Transverse colon (tissue), 4 donors: ENCODE measurements at regions of chr3 and their contacts with region 1.

Region 1: DNA sequence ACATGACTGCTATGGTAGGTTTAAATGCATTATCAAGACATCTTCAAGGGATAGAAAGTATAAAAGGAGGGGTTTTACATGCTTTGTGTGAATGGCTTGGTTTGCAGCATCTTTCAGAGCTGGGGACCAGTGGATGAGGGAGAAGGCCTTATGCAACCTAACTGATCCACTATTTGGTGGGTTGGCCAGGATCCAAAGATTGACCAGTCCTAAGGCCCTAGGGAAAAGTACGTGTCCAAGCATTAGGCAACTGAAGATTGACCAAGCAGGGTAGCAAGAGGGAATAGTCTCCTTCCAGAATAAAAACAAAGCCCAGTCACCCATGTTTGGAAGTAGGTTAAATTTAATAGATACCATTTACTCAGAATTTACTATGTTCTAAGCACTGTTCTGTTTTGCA is 509.3 kb downstream of the EPHB1 start:
- DNase-seq: no peak
- H3K4me3 ChIP-seq: no peak overlapping the region
- H3K27ac ChIP-seq: no peak overlapping the region
- H3K4me1 ChIP-seq: no peaks in the 10 kb centered on the region
- H3K27me3 ChIP-seq: no peaks in the 10 kb centered on the region
- CTCF ChIP-seq: no peak
- EP300 ChIP-seq: no peak
- POLR2A ChIP-seq: no peak

Region 2: GRCh38 chr3:135324301-135324700 is 19.9 kb after region 1 on chr3:
- in situ Hi-C with region 1: no loop called
- intact Hi-C with region 1: loop called (anchors 1 kb)
- DNase-seq: no peak
- H3K4me3 ChIP-seq: no peak overlapping the region
- H3K27ac ChIP-seq: no peak overlapping the region
- H3K4me1 ChIP-seq: no peaks in the 10 kb centered on the region
- H3K27me3 ChIP-seq: no peaks in the 10 kb centered on the region
- CTCF ChIP-seq: no peak
- EP300 ChIP-seq: no peak
- POLR2A ChIP-seq: no peak